Posterior cingulate gyrus (tissue), 11 donors: ENCODE measurements at regions of chr10 and their contacts with region 1.

Region 1: GRCh38 chr10:121216721-121217181 is 365.6 kb downstream of the WDR11 start:
- DNase-seq: peak in 9 of 10 donors; percentile 42 to 96 (median 73)

Region 2: DNA sequence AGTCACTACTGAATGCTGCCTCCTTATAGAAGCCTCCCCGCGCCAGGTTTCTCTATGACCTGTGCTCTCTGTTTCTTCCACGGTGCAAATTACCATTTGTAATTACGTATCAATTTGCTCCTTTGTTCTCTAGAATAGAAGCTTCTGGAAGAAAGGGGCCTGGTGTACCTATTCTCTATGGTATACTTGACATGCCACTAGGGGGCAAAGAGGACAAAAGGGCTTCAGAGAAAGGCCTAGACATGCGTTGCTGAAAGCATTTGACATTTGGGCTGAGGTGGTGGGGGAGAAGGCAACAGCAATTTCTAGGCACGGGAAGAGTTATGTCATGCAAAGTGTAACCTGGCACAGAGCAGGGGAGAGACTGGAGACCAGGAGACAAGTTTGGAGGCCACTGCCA is 216.9 kb before region 1 on chr10:
- intact Hi-C with region 1: no loop called
- DNase-seq: no peak

Region 3: DNA sequence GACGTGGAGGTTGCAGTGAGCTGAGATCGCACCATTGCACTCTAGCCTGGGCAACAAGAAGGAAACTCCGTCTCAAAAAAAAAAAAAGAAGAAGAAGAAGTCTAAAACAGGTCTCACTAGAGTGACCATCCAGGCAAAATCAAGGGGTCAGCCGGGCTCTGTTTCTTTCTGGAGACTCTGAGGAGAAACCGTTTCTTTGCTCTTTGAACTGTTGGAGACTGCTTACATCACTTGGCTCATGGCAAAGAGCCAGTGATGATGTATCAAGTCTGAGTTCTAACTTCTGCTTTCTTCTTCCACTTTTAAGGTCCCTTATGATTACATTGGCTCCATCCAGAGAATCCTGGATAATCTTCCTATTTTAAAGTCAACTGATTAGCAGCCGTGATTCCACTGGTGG is 58.8 kb before region 1 on chr10:
- intact Hi-C with region 1: loop called (anchors 2 kb)
- DNase-seq: no peak